Activated T-helper 2 cell treated with anti-CD3 and anti-CD28 coated beads, Interferon-gamma antibody, Interleukin-2, Interleukin-4, amounts not matched to agents 10 μg/mL and 5 μg/mL and 100 μg/mL, durations not matched to agents 14 hours and 24 hours and 36 hours (primary cell): ENCODE measurements at regions of chr6 and their contacts with region 1.

Region 1: DNA sequence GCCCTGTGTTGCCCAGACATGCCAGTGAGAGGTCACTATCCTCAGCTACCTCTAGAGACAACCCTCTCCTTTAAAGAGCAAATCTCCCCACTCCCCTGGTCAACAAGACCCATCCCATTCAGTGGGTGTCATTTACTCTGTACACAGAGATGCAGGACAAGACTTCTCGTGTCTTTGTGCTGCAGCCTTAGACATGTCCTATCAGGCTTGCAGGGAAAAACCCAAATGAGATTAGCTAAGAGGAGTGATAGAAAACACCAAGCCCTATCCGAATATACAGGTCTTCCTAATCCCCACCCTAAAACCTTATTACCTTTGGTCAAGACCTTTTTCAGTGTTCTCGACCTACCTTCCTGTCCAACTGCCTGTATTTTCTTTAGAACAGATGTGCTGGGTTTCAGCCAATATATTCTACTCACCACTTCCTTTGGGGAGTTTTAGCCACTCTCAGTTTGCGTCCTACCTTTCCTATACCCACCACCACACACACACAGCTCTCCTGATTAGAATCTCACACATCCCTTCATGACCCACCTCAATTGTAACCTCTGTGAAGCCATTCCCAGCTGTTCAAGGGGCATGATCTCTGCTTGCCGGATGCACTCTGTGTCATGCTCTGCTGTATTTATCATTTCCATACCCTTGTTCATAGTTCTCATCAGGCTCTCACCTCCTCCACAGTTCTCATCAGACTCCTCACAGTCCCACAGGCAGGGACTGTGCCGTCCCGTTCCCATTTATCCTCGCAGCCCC is 39.7 kb downstream of the TRAM2 start:
- DNase-seq: peak; percentile 18
- H3K4me3 Mint-ChIP-seq: no peak overlapping the region
- H3K27ac Mint-ChIP-seq: peak overlapping the region; percentile 19
- H3K4me1 Mint-ChIP-seq: peaks cover 51% of the 10 kb centered on the region
- H3K27me3 Mint-ChIP-seq: no peaks in the 10 kb centered on the region

Region 2: GRCh38 chr6:52493669-52494068 is 43.5 kb before region 1 on chr6:
- intact Hi-C with region 1: loop called (anchors 1 kb)
- DNase-seq: no peak
- H3K4me3 Mint-ChIP-seq: no peak overlapping the region
- H3K27ac Mint-ChIP-seq: peak overlapping the region; percentile 25
- H3K4me1 Mint-ChIP-seq: peaks cover 7% of the 10 kb centered on the region
- H3K27me3 Mint-ChIP-seq: peaks cover 4% of the 10 kb centered on the region

Region 3: DNA sequence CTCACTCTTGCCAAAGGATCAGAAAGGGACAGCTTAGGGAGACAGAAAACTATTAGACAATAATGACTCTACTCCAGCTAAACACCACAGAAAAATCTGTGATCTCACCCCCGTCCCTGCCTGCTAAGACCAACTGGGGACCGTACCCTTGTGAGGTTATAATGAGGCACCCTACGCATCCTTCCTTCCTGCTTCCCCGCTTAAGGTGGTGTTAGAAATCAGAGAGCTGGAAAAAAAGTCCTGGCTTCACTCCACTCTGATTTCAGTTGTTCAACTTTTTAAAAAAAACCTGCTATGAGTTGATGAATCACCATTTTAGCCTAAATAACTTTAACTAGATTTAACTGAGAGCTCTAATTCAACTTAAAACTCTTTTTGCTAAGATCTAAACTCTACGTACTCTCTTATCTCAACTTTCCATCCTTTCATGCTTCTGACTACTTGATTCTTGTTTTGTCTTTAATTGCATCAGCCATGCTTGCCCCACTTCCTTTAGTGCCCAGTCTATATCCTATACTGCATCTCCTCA is 97.9 kb after region 1 on chr6:
- intact Hi-C with region 1: loop called (anchors 5 kb)
- DNase-seq: no peak
- H3K4me3 Mint-ChIP-seq: peak overlapping the region; percentile 13
- H3K27ac Mint-ChIP-seq: peak overlapping the region; percentile 53
- H3K4me1 Mint-ChIP-seq: peaks cover 26% of the 10 kb centered on the region
- H3K27me3 Mint-ChIP-seq: no peaks in the 10 kb centered on the region